ENCODE measurements at regions of chr18 and their contacts with region 1.

Region 1: GRCh38 chr18:57754577-57755338 is 48.4 kb downstream of the ATP8B1 start:
- DNase-seq: no peak
- H3K4me3 Mint-ChIP-seq: no peak overlapping the region
- H3K27ac Mint-ChIP-seq: no peak overlapping the region
- H3K4me1 Mint-ChIP-seq: peaks cover under 1% of the 10 kb centered on the region
- H3K27me3 Mint-ChIP-seq: no peaks in the 10 kb centered on the region
- CTCF ChIP-seq: no peak

Region 2: DNA sequence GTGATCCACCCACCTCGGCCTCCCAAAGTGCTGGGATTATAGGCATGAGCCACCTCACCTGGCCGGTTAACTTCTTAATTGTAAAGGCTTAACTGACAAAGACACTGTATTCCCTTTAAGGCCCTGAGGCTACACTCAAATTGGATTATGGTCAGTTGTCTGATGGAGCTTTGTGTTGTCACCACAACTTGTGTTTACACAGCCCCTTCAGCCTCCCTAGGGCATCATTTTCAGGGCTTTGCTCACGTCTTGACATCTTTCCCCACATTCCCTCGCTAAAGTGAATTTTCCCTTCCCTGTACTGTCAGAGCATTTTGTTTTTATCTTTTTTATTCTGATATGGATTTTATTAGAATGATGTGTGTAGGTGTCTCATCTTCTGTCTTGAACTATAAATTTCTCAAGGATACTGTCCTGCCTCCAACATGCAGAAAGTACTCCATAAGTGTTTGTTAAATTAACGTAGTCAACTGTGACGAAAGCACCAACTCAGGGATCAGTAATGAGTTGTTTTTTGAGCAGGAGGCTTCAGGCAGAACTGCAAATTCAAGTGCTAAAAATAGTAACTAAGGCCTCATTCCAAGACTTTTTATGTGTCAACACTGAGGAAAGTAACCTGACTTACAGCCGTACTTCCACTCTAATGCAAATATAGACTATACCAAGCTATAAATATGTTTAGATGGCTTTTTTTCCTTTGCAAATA is 56.0 kb before region 1 on chr18:
- CTCF ChIA-PET with region 1: no interaction called
- POLR2A ChIA-PET with region 1: interaction called, 4 read pairs
- intact Hi-C with region 1: loop called (anchors 10 kb)
- DNase-seq: peak; percentile 41
- H3K4me3 Mint-ChIP-seq: no peak overlapping the region
- H3K27ac Mint-ChIP-seq: peak overlapping the region; percentile 83
- H3K4me1 Mint-ChIP-seq: peaks cover 11% of the 10 kb centered on the region
- H3K27me3 Mint-ChIP-seq: no peaks in the 10 kb centered on the region
- CTCF ChIP-seq: no peak

Region 3: DNA sequence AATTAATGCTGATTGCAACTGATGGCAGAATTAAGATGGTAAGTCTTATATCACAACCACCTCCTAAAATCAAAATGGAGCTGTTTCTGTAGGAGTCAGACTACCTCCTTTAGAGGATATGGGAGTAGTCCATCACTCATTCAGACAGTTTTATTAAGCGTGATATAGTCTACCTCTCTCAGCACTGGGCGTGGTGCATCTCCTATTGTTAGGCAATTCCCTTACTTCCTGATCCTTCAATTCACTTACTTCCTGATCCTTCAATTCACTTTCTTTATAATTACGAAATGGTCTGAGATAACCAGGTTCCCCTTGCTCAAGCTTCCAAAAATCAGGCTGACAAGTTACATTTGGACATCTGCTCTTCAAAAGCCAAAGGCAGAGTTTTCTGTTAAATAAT is 16.4 kb after region 1 on chr18:
- CTCF ChIA-PET with region 1: interaction called, 6 read pairs
- POLR2A ChIA-PET with region 1: interaction called, 15 read pairs
- intact Hi-C with region 1: no loop called
- DNase-seq: peak; percentile 78
- H3K4me3 Mint-ChIP-seq: no peak overlapping the region
- H3K27ac Mint-ChIP-seq: peak overlapping the region; percentile 49
- H3K4me1 Mint-ChIP-seq: peaks cover 21% of the 10 kb centered on the region
- H3K27me3 Mint-ChIP-seq: no peaks in the 10 kb centered on the region
- CTCF ChIP-seq: no peak

Measured in MCF 10A (cell line).